HepG2 (cell line): ENCODE measurements at regions of chr17 and their contacts with region 1.

Region 1: DNA sequence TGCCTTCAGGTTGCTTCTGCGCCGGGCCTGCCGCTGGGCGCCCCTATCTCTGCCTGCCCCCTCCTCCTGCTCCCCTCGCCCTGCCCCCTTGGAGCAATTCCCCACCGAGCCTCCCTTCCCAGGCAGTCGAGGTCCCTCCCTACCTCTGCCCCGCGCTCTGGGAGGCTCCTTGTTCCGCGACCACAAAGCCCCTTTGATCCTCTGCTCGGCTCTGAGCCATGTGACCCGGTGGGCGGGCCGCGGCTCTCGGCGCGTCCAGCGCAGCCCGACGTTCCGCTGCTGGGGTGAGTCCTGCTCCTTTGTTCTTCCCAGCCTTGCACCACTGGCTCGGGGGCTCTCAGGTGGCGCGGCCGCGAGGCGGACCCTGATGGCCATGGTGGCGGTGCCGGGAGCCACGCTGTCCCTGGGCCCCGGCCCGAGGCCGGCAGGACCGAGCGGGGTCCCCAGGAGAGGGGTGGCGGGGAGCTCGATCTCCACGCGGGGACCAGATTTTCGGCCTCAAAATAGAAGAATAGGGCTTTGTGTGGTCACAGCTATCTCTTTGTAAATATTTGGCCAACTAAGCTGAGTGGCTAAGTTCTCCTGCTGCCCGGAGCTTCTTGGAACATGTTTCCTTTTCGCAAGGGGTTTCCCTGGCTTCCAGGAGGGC is 310.6 kb downstream of the SEC14L1 start:
- DNase-seq: peak; percentile 96
- ATAC-seq: peak; percentile 77
- H3K4me3 ChIP-seq: peak overlapping the region; percentile 61 to 91 (median 73)
- H3K27ac ChIP-seq: peak overlapping the region; percentile 95
- H3K4me1 ChIP-seq: peaks cover 59% of the 10 kb centered on the region
- H3K27me3 ChIP-seq: no peaks in the 10 kb centered on the region; a peak in 1 of 5 replicates
- CTCF ChIP-seq: peak; percentile 21; the same call in 1 of the 2 replicates
- EP300 ChIP-seq: peak in 1 of 2 experiments; percentile 71; a peak in 2 of 4 replicates
- POLR2A ChIP-seq: peak in 1 of 2 experiments; percentile 50; a peak in 1 of 4 replicates
- RAD21 ChIP-seq: peak; percentile 13; the same call in 1 of the 2 replicates

Region 2: DNA sequence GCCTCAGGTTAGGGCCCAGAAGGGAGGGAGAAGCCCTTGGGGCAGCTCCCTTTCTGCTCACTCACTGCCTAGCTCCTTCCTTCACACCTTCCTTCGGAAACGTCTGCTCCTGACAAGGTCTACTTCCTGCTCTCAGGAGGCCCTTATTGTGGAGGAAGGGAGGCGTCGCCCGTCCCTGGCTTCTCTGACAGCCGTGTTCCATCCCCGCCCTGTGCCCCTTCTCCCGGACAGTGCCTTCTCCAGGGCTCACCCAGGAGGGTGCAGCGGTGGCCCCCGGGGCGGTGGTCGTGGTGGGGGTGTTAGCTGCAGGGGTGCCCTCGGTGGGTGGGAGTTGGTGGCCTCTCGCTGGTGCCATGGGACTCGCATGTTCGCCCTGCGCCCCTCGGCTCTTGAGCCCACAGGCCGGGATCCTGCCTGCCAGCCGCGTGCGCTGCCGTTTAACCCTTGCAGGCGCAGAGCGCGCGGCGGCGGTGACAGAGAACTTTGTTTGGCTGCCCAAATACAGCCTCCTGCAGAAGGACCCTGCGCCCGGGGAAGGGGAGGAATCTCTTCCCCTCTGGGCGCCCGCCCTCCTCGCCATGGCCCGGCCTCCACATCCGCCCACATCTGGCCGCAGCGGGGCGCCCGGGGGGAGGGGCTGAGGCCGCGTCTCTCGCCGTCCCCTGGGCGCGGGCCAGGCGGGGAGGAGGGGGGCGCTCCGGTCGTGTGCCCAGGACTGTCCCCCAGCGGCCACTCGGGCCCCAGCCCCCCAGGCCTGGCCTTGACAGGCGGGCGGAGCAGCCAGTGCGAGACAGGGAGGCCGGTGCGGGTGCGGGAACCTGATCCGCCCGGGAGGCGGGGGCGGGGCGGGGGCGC is 78.7 kb before region 1 on chr17:
- CTCF ChIA-PET with region 1: no interaction called
- POLR2A ChIA-PET with region 1: interaction called, 21 read pairs
- in situ Hi-C with region 1: no loop called
- intact Hi-C with region 1: no loop called
- DNase-seq: peak; percentile 94
- ATAC-seq: peak; percentile 75
- H3K4me3 ChIP-seq: peak overlapping the region; percentile 76 to 91 (median 88); a peak in 5 of 6 replicates
- H3K27ac ChIP-seq: peak overlapping the region; percentile 71
- H3K4me1 ChIP-seq: peaks cover 65% of the 10 kb centered on the region
- H3K27me3 ChIP-seq: no peaks in the 10 kb centered on the region
- CTCF ChIP-seq: peak; percentile 63
- EP300 ChIP-seq: peak in 1 of 2 experiments; percentile 37; a peak in 1 of 4 replicates
- POLR2A ChIP-seq: no peak; a peak in 1 of 4 replicates
- RAD21 ChIP-seq: peak; percentile 55

Region 3: DNA sequence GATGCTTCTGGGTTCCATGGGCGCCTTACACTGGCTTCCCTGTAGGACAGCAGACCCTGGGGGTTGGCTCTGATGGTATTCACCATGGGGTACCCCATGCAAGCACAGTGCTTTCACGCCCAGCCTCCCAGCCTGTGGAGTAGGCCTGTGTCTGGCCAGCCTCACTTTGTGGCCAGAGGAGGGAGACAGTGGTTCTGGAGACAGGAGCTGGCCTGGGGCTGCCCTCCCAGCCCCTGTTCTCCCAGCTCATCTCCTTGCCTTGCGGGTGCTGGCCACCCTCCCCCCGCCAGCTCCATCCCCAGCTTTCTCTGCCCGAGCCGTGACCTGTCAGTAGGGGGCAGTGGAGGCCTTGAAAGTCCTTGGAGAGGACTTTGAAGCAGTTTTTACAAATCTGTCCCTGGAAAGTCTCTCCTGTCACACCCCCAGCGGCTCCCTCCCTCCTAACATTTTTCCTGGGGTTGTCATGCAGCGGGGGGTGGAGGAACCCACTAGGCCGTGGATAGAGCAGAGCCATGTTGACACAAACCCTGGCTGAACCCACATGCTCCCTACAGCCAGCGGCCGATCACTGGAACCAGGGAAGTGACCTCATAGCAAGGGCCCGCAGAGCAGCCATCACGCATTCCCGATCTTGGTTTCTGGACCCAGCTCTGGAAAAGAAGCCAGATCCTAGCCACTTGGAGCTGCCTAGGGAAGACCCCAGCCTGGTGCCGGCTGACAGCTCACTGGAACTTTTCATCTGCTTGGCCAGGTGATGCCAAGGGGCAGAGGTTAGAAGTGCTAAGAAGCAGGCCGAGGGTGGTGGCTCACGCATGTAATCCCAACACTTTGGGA is 21.2 kb before region 1 on chr17:
- CTCF ChIA-PET with region 1: interaction called, 5 read pairs
- POLR2A ChIA-PET with region 1: interaction called, 107 read pairs
- in situ Hi-C with region 1: no loop called
- intact Hi-C with region 1: loop called (anchors 1 kb)
- DNase-seq: peak; percentile 97
- ATAC-seq: peak; percentile 79
- H3K4me3 ChIP-seq: peak overlapping the region in 1 of 3 experiments; percentile 0; a peak in 1 of 6 replicates
- H3K27ac ChIP-seq: peak overlapping the region; percentile 61
- H3K4me1 ChIP-seq: peaks cover 50% of the 10 kb centered on the region
- H3K27me3 ChIP-seq: no peaks in the 10 kb centered on the region
- CTCF ChIP-seq: peak; percentile 96
- EP300 ChIP-seq: peak in 1 of 2 experiments; percentile 49; a peak in 1 of 4 replicates
- POLR2A ChIP-seq: no peak
- RAD21 ChIP-seq: peak; percentile 97

Region 4: GRCh38 chr17:77471984-77472461 is 20.7 kb after region 1 on chr17:
- CTCF ChIA-PET with region 1: no interaction called
- POLR2A ChIA-PET with region 1: interaction called, 19 read pairs
- in situ Hi-C with region 1: no loop called
- intact Hi-C with region 1: no loop called
- DNase-seq: no peak
- ATAC-seq: no peak
- H3K4me3 ChIP-seq: no peak overlapping the region
- H3K27ac ChIP-seq: no peak overlapping the region
- H3K4me1 ChIP-seq: peaks cover 49% of the 10 kb centered on the region
- H3K27me3 ChIP-seq: no peaks in the 10 kb centered on the region
- CTCF ChIP-seq: no peak
- EP300 ChIP-seq: no peak
- POLR2A ChIP-seq: no peak
- RAD21 ChIP-seq: no peak